ENCODE measurements at regions of chr2 and their contacts with region 1.

Region 1: GRCh38 chr2:85420536-85421259 is 2.2 kb downstream of the SH2D6 start:
- DNase-seq: peak; percentile 95
- ATAC-seq: peak; percentile 63
- H3K4me3 Mint-ChIP-seq: peak overlapping the region; percentile 35
- H3K27ac Mint-ChIP-seq: peak overlapping the region; percentile 61
- H3K4me1 Mint-ChIP-seq: peaks cover 31% of the 10 kb centered on the region
- H3K27me3 Mint-ChIP-seq: no peaks in the 10 kb centered on the region; the same call in 1 of the 2 replicates
- CTCF ChIP-seq: peak; percentile 100

Region 2: DNA sequence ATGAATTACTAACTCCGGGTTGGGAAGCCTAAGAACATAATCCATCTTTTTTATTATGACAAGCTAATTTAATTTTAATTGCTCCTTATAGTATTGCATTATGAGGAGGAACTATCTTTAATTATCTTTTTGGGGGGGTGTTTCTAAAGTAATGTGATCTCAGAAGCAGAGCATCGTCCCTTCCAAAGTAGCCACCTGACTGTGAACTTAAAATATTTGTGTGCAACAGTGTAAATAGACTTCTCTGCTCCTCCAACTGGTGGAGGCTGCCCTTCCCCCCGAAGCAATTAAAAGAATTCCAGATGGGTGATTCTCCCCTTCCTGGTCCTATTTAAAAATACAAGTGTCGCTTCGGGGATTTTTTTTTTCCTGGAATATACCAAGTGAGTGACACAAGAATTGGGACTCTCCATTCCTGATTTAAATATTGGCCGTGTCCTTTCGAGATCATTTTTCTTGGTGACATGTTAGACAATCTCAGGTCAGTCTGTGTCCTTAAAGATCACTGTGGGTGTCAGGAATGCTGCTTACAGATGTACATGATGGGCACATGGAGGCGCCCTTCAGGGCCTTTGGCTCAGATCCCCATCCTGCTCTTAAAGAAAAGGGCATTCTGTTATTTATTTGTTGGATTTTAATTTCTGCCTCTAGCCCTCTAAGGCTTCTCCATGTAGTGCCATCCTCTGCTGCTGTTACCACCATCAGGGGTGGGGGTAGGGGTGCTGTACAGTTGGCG is 231.7 kb before region 1 on chr2:
- CTCF ChIA-PET with region 1: no interaction called
- POLR2A ChIA-PET with region 1: no interaction called
- DNase-seq: no peak
- ATAC-seq: 0 out of 2 replicates have a peak, but pooled peaks have one; percentile 7
- H3K4me3 Mint-ChIP-seq: no peak overlapping the region
- H3K27ac Mint-ChIP-seq: peak overlapping the region; percentile 42; the same call in 1 of the 2 replicates
- H3K4me1 Mint-ChIP-seq: peaks cover 62% of the 10 kb centered on the region
- H3K27me3 Mint-ChIP-seq: no peaks in the 10 kb centered on the region
- CTCF ChIP-seq: no peak

Region 3: GRCh38 chr2:85221067-85221691 is 199.5 kb before region 1 on chr2:
- CTCF ChIA-PET with region 1: no interaction called
- POLR2A ChIA-PET with region 1: no interaction called
- DNase-seq: no peak
- ATAC-seq: peak; percentile 28
- H3K4me3 Mint-ChIP-seq: no peak overlapping the region
- H3K27ac Mint-ChIP-seq: no peak overlapping the region; the same call in 1 of the 2 replicates
- H3K4me1 Mint-ChIP-seq: peaks cover 58% of the 10 kb centered on the region
- H3K27me3 Mint-ChIP-seq: no peaks in the 10 kb centered on the region
- CTCF ChIP-seq: no peak

Region 4: DNA sequence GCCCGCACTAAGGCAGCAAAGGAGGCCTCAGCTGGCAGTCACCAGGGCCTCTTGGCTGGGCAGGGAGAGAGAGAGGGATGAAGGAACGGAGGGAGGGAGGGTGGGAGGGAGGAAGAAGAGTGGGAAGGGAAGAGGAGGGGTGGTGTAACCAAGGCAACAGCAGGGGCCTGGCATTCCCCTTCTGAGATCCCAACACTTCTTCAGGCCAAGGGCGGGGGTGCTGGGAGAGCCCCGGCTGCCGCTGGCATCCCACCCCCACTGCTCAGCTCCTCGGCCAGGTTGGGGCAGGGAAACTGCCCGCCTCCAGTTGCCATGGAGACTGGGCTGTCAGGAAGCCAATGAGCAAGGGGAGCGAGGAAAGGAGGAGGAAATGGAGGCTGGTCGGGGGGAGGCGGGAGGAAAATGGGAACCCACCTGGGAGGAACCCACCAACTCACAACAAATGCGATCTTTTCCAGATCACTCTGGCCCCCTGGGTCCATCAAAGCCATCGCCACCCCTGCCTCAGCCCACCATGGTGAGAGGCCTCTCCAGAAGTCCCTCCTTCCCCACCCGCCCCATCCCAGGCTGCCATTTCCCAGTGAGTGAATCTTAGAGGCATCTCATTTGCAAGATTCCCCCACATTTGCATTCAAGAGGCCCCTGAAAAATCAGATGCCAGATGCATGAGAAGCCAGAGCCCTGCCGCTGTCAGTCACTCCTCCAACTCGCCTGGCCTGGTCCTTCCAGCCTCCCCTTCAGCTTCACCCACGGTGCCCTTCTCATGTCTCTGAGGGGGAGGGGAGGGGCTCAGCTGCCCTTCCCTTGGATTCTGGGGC is 10.3 kb after region 1 on chr2:
- CTCF ChIA-PET with region 1: interaction called, 45 read pairs
- POLR2A ChIA-PET with region 1: interaction called, 4 read pairs
- DNase-seq: peak; percentile 88
- ATAC-seq: peak; percentile 80
- H3K4me3 Mint-ChIP-seq: peak overlapping the region; percentile 48
- H3K27ac Mint-ChIP-seq: no peak overlapping the region; the same call in 1 of the 2 replicates
- H3K4me1 Mint-ChIP-seq: peaks cover 57% of the 10 kb centered on the region
- H3K27me3 Mint-ChIP-seq: peaks cover 21% of the 10 kb centered on the region
- CTCF ChIP-seq: no peak

Region 5: DNA sequence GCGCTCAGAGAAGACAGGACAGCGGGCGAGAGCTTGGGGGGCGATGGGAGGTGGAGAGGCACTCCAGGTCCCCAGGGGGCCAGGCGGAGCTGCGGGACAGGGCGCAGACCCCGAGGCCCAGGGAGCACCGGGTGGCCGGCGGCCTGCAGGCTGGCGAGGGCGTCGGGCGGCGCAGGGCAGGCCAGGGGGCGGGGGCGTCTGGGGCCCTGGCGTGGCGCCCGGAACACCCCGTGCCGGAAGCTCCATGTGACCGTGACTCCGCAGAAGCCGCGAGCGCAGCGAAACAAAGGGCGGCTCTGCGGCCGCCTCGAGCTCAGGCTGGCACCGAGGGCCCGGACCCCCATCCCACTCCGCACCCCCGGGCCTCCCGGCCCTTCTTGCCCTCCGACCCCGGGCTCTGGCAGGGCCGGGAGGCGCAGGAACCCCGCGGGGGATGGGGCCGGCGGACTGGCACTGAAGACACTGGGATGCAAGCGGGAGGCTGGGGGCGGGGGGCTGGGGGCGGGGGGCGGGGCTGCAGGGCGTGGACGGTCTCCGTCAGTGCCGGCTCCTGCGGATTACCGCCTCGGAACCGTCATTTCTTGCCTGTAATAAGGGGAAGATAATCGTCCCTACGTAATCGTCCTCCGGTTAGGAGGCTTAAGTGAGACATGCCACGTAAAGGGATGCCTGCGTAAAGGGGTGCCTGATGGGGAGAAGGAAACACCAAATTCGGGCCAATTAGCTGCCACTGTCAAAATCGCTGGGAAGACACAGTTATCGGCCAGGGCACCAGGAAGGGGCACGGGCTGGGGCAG is 17.0 kb after region 1 on chr2:
- CTCF ChIA-PET with region 1: interaction called, 45 read pairs
- POLR2A ChIA-PET with region 1: interaction called, 5 read pairs
- DNase-seq: peak; percentile 65
- ATAC-seq: peak; percentile 41
- H3K4me3 Mint-ChIP-seq: peak overlapping the region; percentile 73
- H3K27ac Mint-ChIP-seq: peak overlapping the region; percentile 90; the same call in 1 of the 2 replicates
- H3K4me1 Mint-ChIP-seq: peaks cover 41% of the 10 kb centered on the region
- H3K27me3 Mint-ChIP-seq: peaks cover 15% of the 10 kb centered on the region
- CTCF ChIP-seq: no peak

Region 6: GRCh38 chr2:85475799-85476490 is 55.2 kb after region 1 on chr2:
- CTCF ChIA-PET with region 1: interaction called, 12 read pairs
- POLR2A ChIA-PET with region 1: no interaction called
- DNase-seq: no peak
- ATAC-seq: no peak
- H3K4me3 Mint-ChIP-seq: no peak overlapping the region
- H3K27ac Mint-ChIP-seq: no peak overlapping the region
- H3K4me1 Mint-ChIP-seq: peaks cover 16% of the 10 kb centered on the region
- H3K27me3 Mint-ChIP-seq: no peaks in the 10 kb centered on the region; the same call in 1 of the 2 replicates
- CTCF ChIP-seq: no peak

Region 7: GRCh38 chr2:86140969-86141392 is 720.3 kb after region 1 on chr2:
- CTCF ChIA-PET with region 1: no interaction called
- POLR2A ChIA-PET with region 1: no interaction called
- DNase-seq: no peak
- ATAC-seq: no peak
- H3K4me3 Mint-ChIP-seq: no peak overlapping the region
- H3K27ac Mint-ChIP-seq: no peak overlapping the region; the same call in 1 of the 2 replicates
- H3K4me1 Mint-ChIP-seq: no peaks in the 10 kb centered on the region
- H3K27me3 Mint-ChIP-seq: no peaks in the 10 kb centered on the region
- CTCF ChIP-seq: no peak